Posterior cingulate gyrus (tissue), 11 donors: ENCODE measurements at regions of chr13 and their contacts with region 1.

Region 1: GRCh38 chr13:36999054-36999714 is at the start of gene ALG5:
- DNase-seq: peak; percentile 87 to 99 (median 90)

Region 2: GRCh38 chr13:36919833-36920615 is 79.2 kb before region 1 on chr13 and contains the start of gene SMAD9:
- intact Hi-C with region 1: loop called (anchors 10 kb)
- DNase-seq: peak; percentile 47 to 92 (median 60)

Region 3: GRCh38 chr13:37058910-37059847 is 60.0 kb after region 1 on chr13 and contains the start of gene SUPT20H:
- intact Hi-C with region 1: loop called (anchors 5 kb)
- DNase-seq: peak; percentile 86 to 99 (median 94)